Calu3 (cell line): ENCODE measurements at regions of chr6 and their contacts with region 1.

Region 1: DNA sequence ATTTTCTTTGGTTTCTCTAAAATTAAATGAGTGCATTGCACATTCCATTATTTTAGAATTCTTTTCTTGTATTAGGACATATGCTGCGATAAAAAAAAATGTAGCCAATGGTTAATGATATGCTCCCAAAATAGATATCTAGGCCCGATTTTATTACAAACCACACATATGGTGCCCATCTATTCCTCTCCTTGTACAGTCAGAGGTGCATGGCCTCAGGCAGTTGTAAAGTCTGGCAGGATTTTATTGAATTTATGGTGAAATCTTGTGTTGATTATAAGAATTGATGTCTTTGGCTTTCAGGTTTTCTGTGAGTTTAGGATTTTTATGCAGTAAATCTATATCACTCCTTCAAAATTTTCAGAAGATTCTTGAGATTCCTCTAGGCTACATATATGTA is 192.2 kb downstream of the RFPL4B start:
- DNase-seq: no peak
- H3K4me3 Mint-ChIP-seq: no peak overlapping the region
- H3K27ac Mint-ChIP-seq: no peak overlapping the region
- H3K4me1 Mint-ChIP-seq: no peaks in the 10 kb centered on the region
- H3K27me3 Mint-ChIP-seq: no peaks in the 10 kb centered on the region
- CTCF ChIP-seq: no peak

Region 2: DNA sequence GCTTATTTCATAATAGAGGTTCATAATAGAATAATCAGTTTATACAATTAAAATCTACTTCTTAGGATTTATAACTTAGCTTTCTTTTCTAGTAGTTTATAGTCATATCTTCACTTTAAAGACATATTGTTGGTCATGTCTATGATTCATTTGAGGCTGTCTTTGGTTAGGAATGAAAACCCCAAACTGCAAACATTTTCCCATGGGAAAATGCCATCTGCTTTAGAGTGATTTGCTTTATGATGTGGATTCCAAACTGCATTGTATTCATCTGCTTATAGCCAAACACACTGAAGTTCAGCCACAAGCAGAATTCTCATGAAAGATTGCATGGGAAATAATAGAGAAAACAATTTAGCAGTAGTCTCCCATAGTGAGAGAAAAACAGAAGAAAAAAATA is 64.3 kb before region 1 on chr6:
- CTCF ChIA-PET with region 1: no interaction called
- intact Hi-C with region 1: loop called (anchors 1 kb)
- DNase-seq: no peak
- H3K4me3 Mint-ChIP-seq: no peak overlapping the region
- H3K27ac Mint-ChIP-seq: no peak overlapping the region
- H3K4me1 Mint-ChIP-seq: peaks cover 10% of the 10 kb centered on the region
- H3K27me3 Mint-ChIP-seq: no peaks in the 10 kb centered on the region
- CTCF ChIP-seq: no peak

Region 3: DNA sequence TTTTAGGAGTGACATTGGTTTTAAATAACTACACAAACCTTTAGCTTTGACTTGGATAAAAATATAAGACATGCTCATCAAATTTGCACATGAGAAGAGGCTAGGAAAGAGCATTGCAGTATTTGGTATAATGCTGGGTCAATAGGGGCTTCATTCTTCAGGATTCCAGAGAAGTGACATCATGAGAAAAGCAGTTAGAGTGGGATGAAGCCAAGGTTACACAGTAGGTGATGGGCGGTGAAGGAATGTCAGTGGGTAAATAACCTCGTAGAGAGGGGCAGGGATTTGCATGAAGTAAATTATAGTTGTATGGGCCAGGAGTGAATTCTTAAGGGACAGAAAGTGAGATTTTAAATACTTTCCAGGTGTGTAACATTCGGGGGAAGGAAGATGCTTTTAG is 24.0 kb after region 1 on chr6:
- CTCF ChIA-PET with region 1: no interaction called
- intact Hi-C with region 1: no loop called
- DNase-seq: no peak
- H3K4me3 Mint-ChIP-seq: no peak overlapping the region
- H3K27ac Mint-ChIP-seq: no peak overlapping the region
- H3K4me1 Mint-ChIP-seq: peaks cover 28% of the 10 kb centered on the region
- H3K27me3 Mint-ChIP-seq: no peaks in the 10 kb centered on the region
- CTCF ChIP-seq: no peak